Breast epithelium (tissue), 4 donors: ENCODE measurements at regions of chr16 and their contacts with region 1.

Region 1: DNA sequence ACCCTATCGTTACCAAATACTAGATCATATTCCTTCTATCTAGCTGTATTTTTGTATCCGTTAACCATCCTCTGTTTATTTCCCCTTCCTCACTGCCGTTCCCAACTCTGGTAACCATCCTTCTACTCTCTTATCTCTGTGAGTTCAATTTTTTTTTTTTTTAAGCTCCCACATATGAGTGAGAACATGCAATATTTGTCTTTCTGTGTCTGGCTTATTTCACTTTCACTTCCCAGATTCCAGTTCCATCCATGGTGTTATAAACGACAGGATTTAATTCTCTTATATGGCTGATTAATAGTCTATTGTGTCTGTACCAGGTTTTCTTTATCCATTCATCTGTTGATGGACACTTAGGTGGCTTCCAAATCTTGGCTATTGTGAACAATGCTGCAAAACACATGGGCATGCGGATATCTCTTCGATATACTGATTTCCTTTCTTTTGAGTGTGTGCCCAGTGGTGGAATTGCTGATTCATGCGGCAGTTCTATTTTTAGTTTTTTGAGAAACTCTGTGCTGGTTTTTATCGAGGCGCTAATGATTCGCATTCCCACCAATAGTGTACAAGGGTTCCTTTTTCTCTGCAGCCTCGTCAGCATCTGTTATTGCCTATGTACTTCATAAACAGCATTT is 599.6 kb downstream of the TMEM114 start:
- DNase-seq: no peak
- H3K4me3 ChIP-seq: no peak overlapping the region
- H3K27ac ChIP-seq: no peak overlapping the region
- H3K4me1 ChIP-seq: no peaks in the 10 kb centered on the region
- H3K27me3 ChIP-seq: peaks cover 0 to 3% of the 10 kb centered on the region in 2 donors
- CTCF ChIP-seq: no peak
- POLR2A ChIP-seq: no peak

Region 2: GRCh38 chr16:6690741-6691140 is 1300.0 kb before region 1 on chr16:
- intact Hi-C with region 1: loop called (anchors 5 kb)
- DNase-seq: no peak
- H3K4me3 ChIP-seq: no peak overlapping the region
- H3K27ac ChIP-seq: no peak overlapping the region
- H3K4me1 ChIP-seq: no peaks in the 10 kb centered on the region
- H3K27me3 ChIP-seq: peaks cover 0 to 3% of the 10 kb centered on the region in 2 donors
- CTCF ChIP-seq: no peak
- POLR2A ChIP-seq: no peak